Activated CD8-positive, alpha-beta T cell treated with anti-CD3 and anti-CD28 coated beads for 36 hours (primary cell): ENCODE measurements at regions of chr1 and their contacts with region 1.

Region 1: GRCh38 chr1:219209578-219209977 is 35.9 kb downstream of the LYPLAL1 start:
- DNase-seq: no peak
- ATAC-seq: no peak
- H3K4me3 Mint-ChIP-seq: no peak overlapping the region
- H3K27ac Mint-ChIP-seq: no peak overlapping the region
- H3K4me1 Mint-ChIP-seq: no peaks in the 10 kb centered on the region
- H3K27me3 Mint-ChIP-seq: no peaks in the 10 kb centered on the region
- CTCF ChIP-seq: no peak

Region 2: DNA sequence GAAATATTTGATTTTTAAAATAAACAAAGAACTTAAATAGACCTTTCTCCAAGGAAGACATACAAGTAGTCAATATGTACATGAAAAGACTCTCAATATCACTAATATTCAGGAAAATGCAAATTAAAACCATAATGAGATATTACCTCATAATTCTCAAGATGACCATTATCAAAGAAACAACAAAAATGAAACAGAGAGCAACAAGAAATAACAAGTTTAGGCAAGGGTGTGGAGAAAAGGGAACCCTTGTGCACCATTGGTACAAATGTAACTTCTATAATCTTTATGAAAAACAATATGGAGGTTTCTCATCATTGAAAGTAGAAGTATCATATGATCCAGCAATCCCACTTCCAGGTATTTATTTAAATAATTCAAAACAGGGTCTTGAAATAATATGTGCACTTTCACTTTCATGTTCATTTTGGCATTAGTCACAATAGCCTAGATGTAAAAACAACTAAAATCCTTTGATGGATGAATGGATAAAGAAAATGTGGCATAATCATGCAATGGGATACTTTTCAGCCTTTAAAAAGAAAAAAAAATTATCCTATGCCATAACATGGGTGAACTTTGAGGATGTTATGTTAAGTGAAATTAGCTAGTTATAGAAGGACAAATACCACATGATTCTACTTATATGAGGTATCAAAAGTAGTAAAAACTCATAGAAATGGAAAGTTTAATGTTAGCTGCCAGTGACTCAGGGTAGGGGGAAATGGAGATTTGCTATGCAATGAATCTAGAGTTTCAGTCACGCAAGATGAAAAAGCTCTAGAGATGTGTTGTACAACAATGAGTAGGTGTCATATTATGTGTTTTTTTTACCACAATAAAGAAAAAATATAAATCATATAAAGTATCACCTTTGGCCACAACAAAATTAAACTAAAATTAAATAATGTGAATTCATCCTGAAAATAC is 150.4 kb before region 1 on chr1:
- CTCF ChIA-PET with region 1: no interaction called
- POLR2A ChIA-PET with region 1: no interaction called
- intact Hi-C with region 1: no loop called
- DNase-seq: no peak
- ATAC-seq: peak; percentile 66
- H3K4me3 Mint-ChIP-seq: no peak overlapping the region
- H3K27ac Mint-ChIP-seq: no peak overlapping the region
- H3K4me1 Mint-ChIP-seq: peaks cover 8% of the 10 kb centered on the region
- H3K27me3 Mint-ChIP-seq: peaks cover 4% of the 10 kb centered on the region
- CTCF ChIP-seq: no peak

Region 3: GRCh38 chr1:219271818-219272535 is 62.4 kb after region 1 on chr1:
- CTCF ChIA-PET with region 1: no interaction called
- POLR2A ChIA-PET with region 1: no interaction called
- intact Hi-C with region 1: no loop called
- DNase-seq: no peak
- ATAC-seq: no peak
- H3K4me3 Mint-ChIP-seq: no peak overlapping the region
- H3K27ac Mint-ChIP-seq: no peak overlapping the region
- H3K4me1 Mint-ChIP-seq: no peaks in the 10 kb centered on the region
- H3K27me3 Mint-ChIP-seq: no peaks in the 10 kb centered on the region
- CTCF ChIP-seq: no peak

Region 4: GRCh38 chr1:219385786-219386427 is 176.3 kb after region 1 on chr1:
- CTCF ChIA-PET with region 1: interaction called, 3 read pairs
- POLR2A ChIA-PET with region 1: no interaction called
- intact Hi-C with region 1: loop called (anchors 10 kb)
- DNase-seq: peak; percentile 59
- ATAC-seq: peak; percentile 51
- H3K4me3 Mint-ChIP-seq: no peak overlapping the region
- H3K27ac Mint-ChIP-seq: no peak overlapping the region
- H3K4me1 Mint-ChIP-seq: no peaks in the 10 kb centered on the region
- H3K27me3 Mint-ChIP-seq: no peaks in the 10 kb centered on the region
- CTCF ChIP-seq: peak; percentile 60

Region 5: GRCh38 chr1:219416594-219417238 is 207.1 kb after region 1 on chr1:
- CTCF ChIA-PET with region 1: interaction called, 3 read pairs
- POLR2A ChIA-PET with region 1: no interaction called
- intact Hi-C with region 1: loop called (anchors 10 kb)
- DNase-seq: peak; percentile 79
- ATAC-seq: peak; percentile 55
- H3K4me3 Mint-ChIP-seq: no peak overlapping the region
- H3K27ac Mint-ChIP-seq: no peak overlapping the region
- H3K4me1 Mint-ChIP-seq: no peaks in the 10 kb centered on the region
- H3K27me3 Mint-ChIP-seq: no peaks in the 10 kb centered on the region
- CTCF ChIP-seq: peak; percentile 59

Region 6: DNA sequence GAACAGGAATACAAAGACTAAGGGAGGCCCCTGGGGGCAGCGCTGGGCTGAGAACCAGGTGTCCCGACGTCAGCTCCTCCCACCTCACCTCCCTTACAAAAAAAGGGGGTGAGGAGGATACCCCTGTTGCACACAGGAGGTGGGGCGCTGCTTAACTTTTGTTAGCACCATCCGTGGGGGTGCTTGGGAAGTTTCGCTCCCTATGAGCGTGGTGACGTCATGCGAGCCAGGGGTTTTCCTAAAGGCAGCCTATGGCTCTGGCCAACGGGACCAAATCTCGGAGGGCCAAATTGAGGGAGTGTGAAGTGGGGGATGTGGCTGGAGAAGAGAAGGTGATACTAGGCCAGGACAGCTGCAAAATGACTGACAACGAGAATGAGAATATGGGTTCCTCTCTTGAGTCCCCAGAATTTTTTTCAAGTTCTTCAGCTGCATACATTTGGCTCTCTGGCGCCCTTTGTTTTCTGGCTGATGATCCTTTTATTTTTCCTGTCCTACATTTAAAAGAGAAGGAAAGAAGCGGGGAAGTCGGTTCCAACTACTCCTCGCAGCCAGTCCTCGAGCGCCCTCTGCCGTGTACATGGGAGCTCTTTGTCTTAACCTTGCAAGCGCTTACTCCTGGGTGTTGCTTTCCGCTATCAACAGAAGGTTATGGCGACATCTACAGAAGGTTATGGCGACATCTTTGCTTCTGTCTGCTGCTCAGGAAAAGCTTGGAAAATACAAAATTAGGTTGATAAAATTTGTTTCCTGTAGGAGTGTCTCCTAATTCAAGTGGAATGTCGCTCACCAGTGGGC is 451.3 kb after region 1 on chr1:
- CTCF ChIA-PET with region 1: no interaction called
- POLR2A ChIA-PET with region 1: no interaction called
- intact Hi-C with region 1: loop called (anchors 10 kb)
- DNase-seq: peak; percentile 67
- ATAC-seq: no peak
- H3K4me3 Mint-ChIP-seq: no peak overlapping the region
- H3K27ac Mint-ChIP-seq: no peak overlapping the region
- H3K4me1 Mint-ChIP-seq: no peaks in the 10 kb centered on the region
- H3K27me3 Mint-ChIP-seq: peaks cover 20% of the 10 kb centered on the region
- CTCF ChIP-seq: peak; percentile 54